CD4-positive, alpha-beta T cell (primary cell): ENCODE measurements at regions of chr6 and their contacts with region 1.

Region 1: GRCh38 chr6:28104392-28105244 is 19.8 kb upstream of the ZSCAN16 start:
- DNase-seq: peak; percentile 69 to 92 (median 82)
- ATAC-seq: peak; percentile 98
- H3K4me3 ChIP-seq: peak overlapping the region; percentile 74
- H3K4me3 Mint-ChIP-seq: peak overlapping the region; percentile 94
- H3K27ac ChIP-seq: peak overlapping the region; percentile 63 to 78
- H3K27ac Mint-ChIP-seq: peak overlapping the region; percentile 91
- H3K4me1 ChIP-seq: peaks cover 10% of the 10 kb centered on the region
- H3K4me1 Mint-ChIP-seq: peaks cover 13% of the 10 kb centered on the region
- H3K27me3 ChIP-seq: no peaks in the 10 kb centered on the region
- H3K27me3 Mint-ChIP-seq: peaks cover under 1% of the 10 kb centered on the region
- CTCF ChIP-seq: peak; percentile 62

Region 2: GRCh38 chr6:28053584-28053983 is 51.0 kb before region 1 on chr6:
- CTCF ChIA-PET with region 1: no interaction called
- POLR2A ChIA-PET with region 1: no interaction called
- intact Hi-C with region 1: loop called in 1 of 2 experiments (anchors 2 kb)
- DNase-seq: no peak
- ATAC-seq: no peak
- H3K4me3 ChIP-seq: no peak overlapping the region
- H3K4me3 Mint-ChIP-seq: no peak overlapping the region
- H3K27ac ChIP-seq: no peak overlapping the region
- H3K27ac Mint-ChIP-seq: no peak overlapping the region
- H3K4me1 ChIP-seq: no peaks in the 10 kb centered on the region
- H3K4me1 Mint-ChIP-seq: no peaks in the 10 kb centered on the region
- H3K27me3 ChIP-seq: peaks cover 2 to 41% of the 10 kb centered on the region in 2 experiments
- H3K27me3 Mint-ChIP-seq: peaks cover 43% of the 10 kb centered on the region
- CTCF ChIP-seq: no peak

Region 3: GRCh38 chr6:28080631-28081485 is 23.8 kb before region 1 on chr6:
- CTCF ChIA-PET with region 1: interaction called, 3 read pairs
- POLR2A ChIA-PET with region 1: interaction called, 5 read pairs
- intact Hi-C with region 1: loop called in 1 of 2 experiments (anchors 2 kb)
- DNase-seq: peak; percentile 81 to 96 (median 90)
- ATAC-seq: peak; percentile 76
- H3K4me3 ChIP-seq: peak overlapping the region; percentile 71
- H3K4me3 Mint-ChIP-seq: peak overlapping the region; percentile 86
- H3K27ac ChIP-seq: peak overlapping the region; percentile 82 to 90
- H3K27ac Mint-ChIP-seq: peak overlapping the region; percentile 88
- H3K4me1 ChIP-seq: peaks cover 16% of the 10 kb centered on the region
- H3K4me1 Mint-ChIP-seq: peaks cover 22% of the 10 kb centered on the region
- H3K27me3 ChIP-seq: no peaks in the 10 kb centered on the region
- H3K27me3 Mint-ChIP-seq: no peaks in the 10 kb centered on the region
- CTCF ChIP-seq: no peak

Region 4: GRCh38 chr6:28124102-28124970 is 19.7 kb after region 1 on chr6 and contains the start of gene ZSCAN16:
- CTCF ChIA-PET with region 1: interaction called, 5 read pairs
- POLR2A ChIA-PET with region 1: interaction called, 13 read pairs
- intact Hi-C with region 1: no loop called
- DNase-seq: peak; percentile 51 to 87 (median 70)
- ATAC-seq: peak; percentile 56
- H3K4me3 ChIP-seq: peak within 1 kb of the TSS; percentile 85
- H3K4me3 Mint-ChIP-seq: peak within 1 kb of the TSS; percentile 83
- H3K27ac ChIP-seq: peak within 1 kb of the TSS; percentile 84 to 91
- H3K27ac Mint-ChIP-seq: peak within 1 kb of the TSS; percentile 95
- H3K4me1 ChIP-seq: peaks cover 20% of the 10 kb centered on the region
- H3K4me1 Mint-ChIP-seq: peaks cover 56% of the 10 kb centered on the region
- H3K27me3 ChIP-seq: no peaks in the 10 kb centered on the region
- H3K27me3 Mint-ChIP-seq: no peaks in the 10 kb centered on the region
- CTCF ChIP-seq: no peak
- total RNA-seq, gene ZSCAN16: 7.3 to 7.4 TPM

Region 5: DNA sequence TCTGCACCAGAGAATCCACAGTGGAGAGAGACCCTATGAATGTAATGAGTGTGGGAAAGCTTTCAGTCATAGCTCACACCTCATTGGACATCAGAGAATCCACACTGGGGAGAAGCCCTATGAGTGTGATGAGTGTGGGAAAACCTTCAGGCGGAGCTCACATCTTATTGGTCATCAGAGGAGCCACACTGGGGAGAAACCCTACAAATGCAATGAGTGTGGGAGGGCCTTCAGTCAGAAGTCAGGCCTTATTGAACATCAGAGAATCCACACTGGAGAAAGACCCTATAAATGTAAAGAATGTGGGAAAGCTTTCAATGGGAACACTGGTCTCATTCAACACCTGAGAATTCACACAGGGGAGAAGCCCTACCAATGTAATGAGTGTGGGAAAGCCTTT is 48.9 kb after region 1 on chr6:
- CTCF ChIA-PET with region 1: no interaction called
- POLR2A ChIA-PET with region 1: no interaction called
- intact Hi-C with region 1: no loop called
- DNase-seq: no peak
- ATAC-seq: no peak
- H3K4me3 ChIP-seq: no peak overlapping the region
- H3K4me3 Mint-ChIP-seq: no peak overlapping the region
- H3K27ac ChIP-seq: no peak overlapping the region
- H3K27ac Mint-ChIP-seq: no peak overlapping the region
- H3K4me1 ChIP-seq: no peaks in the 10 kb centered on the region
- H3K4me1 Mint-ChIP-seq: peaks cover 5% of the 10 kb centered on the region
- H3K27me3 ChIP-seq: no peaks in the 10 kb centered on the region
- H3K27me3 Mint-ChIP-seq: no peaks in the 10 kb centered on the region
- CTCF ChIP-seq: no peak

Region 6: GRCh38 chr6:28171271-28171670 is 66.7 kb after region 1 on chr6:
- CTCF ChIA-PET with region 1: no interaction called
- POLR2A ChIA-PET with region 1: no interaction called
- intact Hi-C with region 1: no loop called
- DNase-seq: no peak
- ATAC-seq: no peak
- H3K4me3 ChIP-seq: no peak overlapping the region
- H3K4me3 Mint-ChIP-seq: no peak overlapping the region
- H3K27ac ChIP-seq: no peak overlapping the region
- H3K27ac Mint-ChIP-seq: no peak overlapping the region
- H3K4me1 ChIP-seq: no peaks in the 10 kb centered on the region
- H3K4me1 Mint-ChIP-seq: no peaks in the 10 kb centered on the region
- H3K27me3 ChIP-seq: peaks cover 3% of the 10 kb centered on the region in 2 experiments
- H3K27me3 Mint-ChIP-seq: peaks cover 29% of the 10 kb centered on the region
- CTCF ChIP-seq: no peak

Region 7: DNA sequence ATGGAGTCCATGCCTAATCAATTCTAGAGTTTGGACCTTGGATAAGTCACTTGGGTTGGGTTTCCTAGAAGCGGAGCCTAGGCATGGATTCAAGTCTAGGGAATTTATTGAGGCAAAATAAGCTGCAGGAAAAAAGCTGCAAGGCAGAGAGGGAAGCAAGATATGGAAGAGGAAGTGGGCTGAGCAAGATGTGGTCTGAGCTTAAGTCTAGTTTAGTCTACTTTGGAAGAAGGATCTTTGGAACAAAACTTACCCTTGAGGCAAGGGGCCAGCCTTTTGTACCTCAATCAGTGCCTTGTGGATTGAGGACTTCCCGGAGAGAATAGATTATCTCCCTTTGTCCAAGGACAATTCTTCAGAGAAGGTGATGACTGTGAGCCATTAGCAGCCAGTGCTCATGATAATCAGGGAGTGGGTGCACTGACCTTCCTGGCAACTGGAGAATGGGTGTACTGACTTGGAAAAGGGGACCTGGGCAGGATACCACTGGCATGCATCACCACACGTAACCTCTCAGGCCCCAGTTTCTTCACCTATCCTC is 131.4 kb after region 1 on chr6:
- CTCF ChIA-PET with region 1: no interaction called
- POLR2A ChIA-PET with region 1: no interaction called
- intact Hi-C with region 1: no loop called
- DNase-seq: no peak
- ATAC-seq: no peak
- H3K4me3 ChIP-seq: no peak overlapping the region
- H3K4me3 Mint-ChIP-seq: no peak overlapping the region
- H3K27ac ChIP-seq: no peak overlapping the region
- H3K27ac Mint-ChIP-seq: no peak overlapping the region
- H3K4me1 ChIP-seq: no peaks in the 10 kb centered on the region
- H3K4me1 Mint-ChIP-seq: no peaks in the 10 kb centered on the region
- H3K27me3 ChIP-seq: no peaks in the 10 kb centered on the region
- H3K27me3 Mint-ChIP-seq: peaks cover 18% of the 10 kb centered on the region
- CTCF ChIP-seq: no peak